T-cell (primary cell): ENCODE measurements at regions of chr12 and their contacts with region 1.

Region 1: DNA sequence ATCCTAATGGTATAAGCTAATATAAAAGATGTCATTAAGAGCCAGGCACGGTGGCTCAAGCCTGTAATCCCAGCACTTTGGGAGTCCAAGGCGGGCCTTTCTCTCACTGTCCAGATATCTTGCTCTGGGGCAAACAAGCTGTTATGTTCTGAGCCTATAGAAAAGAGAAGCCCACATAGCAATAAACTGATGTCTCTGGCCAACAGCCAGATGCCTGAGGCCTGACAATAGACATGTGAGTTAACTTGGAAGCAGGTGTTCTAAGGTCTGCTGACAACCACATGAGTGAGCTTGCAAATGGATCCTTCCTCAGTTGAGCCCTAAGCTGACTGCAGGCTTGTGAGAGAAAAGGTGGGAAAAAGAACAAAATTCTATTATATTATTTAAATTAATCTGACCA is 25.0 kb downstream of the YAF2 start:
- DNase-seq: no peak
- ATAC-seq: no peak
- H3K4me3 ChIP-seq: no peak overlapping the region
- H3K4me3 Mint-ChIP-seq: no peak overlapping the region
- H3K27ac ChIP-seq: no peak overlapping the region
- H3K27ac Mint-ChIP-seq: no peak overlapping the region
- H3K4me1 ChIP-seq: no peaks in the 10 kb centered on the region
- H3K4me1 Mint-ChIP-seq: peaks cover 30 to 37% (median 30%) of the 10 kb centered on the region in 3 donors
- H3K27me3 ChIP-seq: no peaks in the 10 kb centered on the region
- H3K27me3 Mint-ChIP-seq: no peaks in the 10 kb centered on the region

Region 2: DNA sequence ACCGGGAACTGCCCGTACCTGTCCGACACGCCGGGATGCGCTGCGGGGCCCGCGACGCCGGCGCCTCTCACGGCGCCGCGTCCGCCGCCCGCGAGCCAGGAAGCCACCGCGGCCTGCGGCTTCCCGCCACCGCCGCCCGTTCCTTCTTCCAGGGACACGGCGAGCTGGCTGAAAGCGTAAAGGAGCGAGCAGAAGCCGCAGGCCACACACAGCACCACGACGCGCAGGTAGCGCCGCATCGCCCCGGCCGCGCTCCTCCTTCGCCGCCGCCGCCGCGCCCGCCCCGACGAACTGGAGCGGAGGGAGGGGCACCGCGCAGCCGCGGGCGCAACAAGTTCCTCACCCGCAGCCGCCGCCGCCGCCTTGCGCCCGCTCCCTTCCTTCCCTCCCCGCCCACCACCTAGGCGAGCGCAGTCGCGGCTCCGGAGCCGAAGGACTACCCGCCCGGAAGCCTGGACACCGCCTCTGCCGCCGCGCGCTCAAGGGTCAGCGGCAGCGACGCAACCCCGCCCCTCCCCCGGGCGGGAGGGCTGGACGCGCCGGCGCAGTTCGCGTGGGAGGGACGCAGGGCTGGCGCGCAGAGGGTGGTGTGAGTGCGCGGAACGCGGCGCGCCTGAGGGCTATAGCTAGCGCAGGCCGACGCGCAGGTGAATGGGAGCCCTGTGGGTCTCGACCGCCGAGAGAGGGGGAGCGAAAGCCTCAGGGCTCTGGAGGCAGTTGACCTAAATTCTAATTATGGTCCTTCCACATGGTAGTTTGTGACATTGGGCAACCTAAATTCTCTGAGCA is 68.4 kb before region 1 on chr12 and contains the start of gene GXYLT1:
- CTCF ChIA-PET with region 1: no interaction called
- POLR2A ChIA-PET with region 1: no interaction called
- DNase-seq: peak; percentile 46 to 82 (median 64)
- ATAC-seq: peak; percentile 87 to 91 (median 89)
- H3K4me3 ChIP-seq: peak within 1 kb of the TSS; percentile 67 to 83
- H3K4me3 Mint-ChIP-seq: peak within 1 kb of the TSS; percentile 83 to 98 (median 95)
- H3K27ac ChIP-seq: peak within 1 kb of the TSS; percentile 36
- H3K27ac Mint-ChIP-seq: peak within 1 kb of the TSS; percentile 84 to 92
- H3K4me1 ChIP-seq: peaks cover 6 to 20% of the 10 kb centered on the region in 2 experiments
- H3K4me1 Mint-ChIP-seq: peaks cover 43 to 51% (median 49%) of the 10 kb centered on the region in 3 donors
- H3K27me3 ChIP-seq: no peaks in the 10 kb centered on the region
- H3K27me3 Mint-ChIP-seq: no peaks in the 10 kb centered on the region
- total RNA-seq, gene GXYLT1: 6.3 to 9.3 (median 7.1) TPM

Region 3: DNA sequence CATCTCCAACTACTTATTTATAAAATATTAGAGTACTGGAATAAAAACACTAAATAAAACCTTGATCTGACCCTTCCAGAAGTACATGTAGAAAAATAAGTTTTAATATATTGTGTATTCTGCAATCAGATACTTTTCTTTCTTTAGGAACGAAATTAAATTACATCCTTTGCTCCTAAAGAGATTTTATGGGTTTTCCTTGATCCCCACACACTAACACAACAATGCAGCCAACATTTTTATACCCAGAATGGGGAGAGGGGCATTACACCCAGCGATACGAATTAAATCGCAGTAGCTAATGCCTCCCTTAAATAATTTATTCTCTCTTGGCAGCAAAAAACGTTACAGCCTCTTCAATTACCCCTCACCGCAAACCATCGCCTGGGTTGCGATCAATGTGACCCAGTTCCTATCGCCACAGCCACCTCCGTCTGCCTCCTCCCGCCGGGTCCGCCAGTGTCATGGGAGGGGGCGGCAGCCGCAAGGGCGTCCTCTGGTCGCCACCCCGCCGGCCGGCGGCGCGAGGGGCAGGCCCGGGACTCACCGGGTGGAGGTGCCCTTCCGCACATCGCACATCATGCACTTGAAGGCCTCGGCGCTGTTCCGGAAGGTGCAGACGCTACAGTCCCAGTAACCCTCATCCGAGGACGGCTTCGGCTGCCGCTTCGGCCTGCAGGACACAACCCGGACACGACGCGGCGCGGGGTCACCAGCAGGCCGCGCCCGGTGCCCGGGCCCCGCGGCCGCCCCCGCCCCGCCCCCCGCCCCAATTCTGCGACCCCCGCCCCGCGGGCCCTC is 24.2 kb after region 1 on chr12:
- CTCF ChIA-PET with region 1: interaction called in 1 of 2 experiments, 13 read pairs
- POLR2A ChIA-PET with region 1: interaction called, 3 to 6 read pairs
- DNase-seq: peak; percentile 45 to 81 (median 63)
- ATAC-seq: peak; percentile 71 to 76 (median 74)
- H3K4me3 ChIP-seq: peak overlapping the region; percentile 53 to 69
- H3K4me3 Mint-ChIP-seq: peak overlapping the region; percentile 87 to 90 (median 88)
- H3K27ac ChIP-seq: peak overlapping the region; percentile 64
- H3K27ac Mint-ChIP-seq: peak overlapping the region; percentile 82 to 87
- H3K4me1 ChIP-seq: peaks cover 16 to 22% of the 10 kb centered on the region in 2 experiments
- H3K4me1 Mint-ChIP-seq: peaks cover 51 to 57% (median 53%) of the 10 kb centered on the region in 3 donors
- H3K27me3 ChIP-seq: no peaks in the 10 kb centered on the region
- H3K27me3 Mint-ChIP-seq: no peaks in the 10 kb centered on the region

Region 4: GRCh38 chr12:42779186-42779859 is 566.3 kb after region 1 on chr12:
- CTCF ChIA-PET with region 1: no interaction called
- POLR2A ChIA-PET with region 1: no interaction called
- DNase-seq: no peak
- ATAC-seq: no peak
- H3K4me3 ChIP-seq: no peak overlapping the region
- H3K4me3 Mint-ChIP-seq: no peak overlapping the region
- H3K27ac ChIP-seq: no peak overlapping the region
- H3K27ac Mint-ChIP-seq: no peak overlapping the region
- H3K4me1 ChIP-seq: no peaks in the 10 kb centered on the region
- H3K4me1 Mint-ChIP-seq: no peaks in the 10 kb centered on the region
- H3K27me3 ChIP-seq: no peaks in the 10 kb centered on the region
- H3K27me3 Mint-ChIP-seq: no peaks in the 10 kb centered on the region